CD8-positive, alpha-beta T cell (primary cell): ENCODE measurements at regions of chr1 and their contacts with region 1.

Region 1: DNA sequence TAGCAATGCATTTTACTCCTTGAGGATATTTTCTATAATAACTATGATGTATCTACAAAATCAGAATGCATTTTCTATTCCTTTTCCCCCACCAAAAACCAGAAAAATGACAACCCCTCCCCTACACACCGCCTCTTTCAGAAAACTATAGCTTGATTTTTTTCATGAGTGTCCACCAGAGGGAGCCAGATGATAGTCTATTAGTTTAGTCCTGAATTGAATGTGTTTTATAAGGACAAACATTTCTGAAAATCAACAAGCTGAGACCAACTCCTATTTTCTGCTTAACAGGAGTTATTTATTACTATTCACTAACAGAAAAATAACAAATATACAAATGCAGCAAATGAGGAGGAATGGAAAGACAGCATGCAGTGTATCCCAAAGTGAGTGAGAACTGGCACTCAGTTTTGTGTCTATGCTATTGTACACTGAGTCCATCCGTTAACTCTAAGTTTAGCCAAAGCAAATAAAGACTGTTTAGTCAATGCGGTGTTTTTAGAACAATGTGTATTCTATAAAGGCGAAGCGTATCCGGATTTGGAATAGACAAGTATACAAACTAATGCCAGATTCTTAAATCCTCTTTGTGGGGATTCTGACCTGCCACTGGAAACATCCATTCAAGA is 182.6 kb downstream of the VAV3 start:
- DNase-seq: peak in 5 of 9 experiments; percentile 25 to 82 (median 64)
- ATAC-seq: no peak
- H3K4me3 ChIP-seq: no peak overlapping the region
- H3K4me3 Mint-ChIP-seq: no peak overlapping the region
- H3K27ac ChIP-seq: no peak overlapping the region
- H3K27ac Mint-ChIP-seq: no peak overlapping the region
- H3K4me1 ChIP-seq: peaks cover 29% of the 10 kb centered on the region
- H3K4me1 Mint-ChIP-seq: peaks cover 36% of the 10 kb centered on the region
- H3K27me3 ChIP-seq: no peaks in the 10 kb centered on the region
- H3K27me3 Mint-ChIP-seq: no peaks in the 10 kb centered on the region
- CTCF ChIP-seq: peak; percentile 91

Region 2: GRCh38 chr1:107793896-107794453 is 11.6 kb after region 1 on chr1:
- CTCF ChIA-PET with region 1: interaction called, 10 read pairs
- POLR2A ChIA-PET with region 1: interaction called, 7 read pairs
- intact Hi-C with region 1: no loop called
- DNase-seq: no peak
- ATAC-seq: no peak
- H3K4me3 ChIP-seq: no peak overlapping the region
- H3K4me3 Mint-ChIP-seq: no peak overlapping the region
- H3K27ac ChIP-seq: no peak overlapping the region
- H3K27ac Mint-ChIP-seq: no peak overlapping the region
- H3K4me1 ChIP-seq: peaks cover 4% of the 10 kb centered on the region
- H3K4me1 Mint-ChIP-seq: peaks cover 29% of the 10 kb centered on the region
- H3K27me3 ChIP-seq: no peaks in the 10 kb centered on the region
- H3K27me3 Mint-ChIP-seq: no peaks in the 10 kb centered on the region
- CTCF ChIP-seq: no peak

Region 3: GRCh38 chr1:107840725-107841124 is 58.4 kb after region 1 on chr1:
- CTCF ChIA-PET with region 1: interaction called, 3 read pairs
- POLR2A ChIA-PET with region 1: no interaction called
- intact Hi-C with region 1: loop called in 1 of 2 experiments (anchors 2 kb)
- DNase-seq: peak in 2 of 9 experiments; percentile 37 to 63
- ATAC-seq: peak; percentile 50
- H3K4me3 ChIP-seq: peak overlapping the region; percentile 2 to 6
- H3K4me3 Mint-ChIP-seq: peak overlapping the region; percentile 42
- H3K27ac ChIP-seq: peak overlapping the region in 1 of 2 experiments; percentile 73
- H3K27ac Mint-ChIP-seq: peak overlapping the region; percentile 81
- H3K4me1 ChIP-seq: peaks cover 64% of the 10 kb centered on the region
- H3K4me1 Mint-ChIP-seq: peaks cover 87% of the 10 kb centered on the region
- H3K27me3 ChIP-seq: no peaks in the 10 kb centered on the region
- H3K27me3 Mint-ChIP-seq: no peaks in the 10 kb centered on the region
- CTCF ChIP-seq: no peak

Region 4: GRCh38 chr1:107949467-107950253 is 167.3 kb after region 1 on chr1:
- CTCF ChIA-PET with region 1: no interaction called
- POLR2A ChIA-PET with region 1: no interaction called
- intact Hi-C with region 1: no loop called
- DNase-seq: no peak
- ATAC-seq: no peak
- H3K4me3 ChIP-seq: no peak overlapping the region
- H3K4me3 Mint-ChIP-seq: no peak overlapping the region
- H3K27ac ChIP-seq: peak overlapping the region in 1 of 2 experiments; percentile 37
- H3K27ac Mint-ChIP-seq: no peak overlapping the region
- H3K4me1 ChIP-seq: peaks cover 15% of the 10 kb centered on the region
- H3K4me1 Mint-ChIP-seq: peaks cover 52% of the 10 kb centered on the region
- H3K27me3 ChIP-seq: no peaks in the 10 kb centered on the region
- H3K27me3 Mint-ChIP-seq: no peaks in the 10 kb centered on the region
- CTCF ChIP-seq: no peak

Region 5: GRCh38 chr1:108118018-108118902 is 335.9 kb after region 1 on chr1:
- CTCF ChIA-PET with region 1: interaction called, 492 read pairs
- POLR2A ChIA-PET with region 1: interaction called, 15 read pairs
- intact Hi-C with region 1: no loop called
- DNase-seq: no peak
- ATAC-seq: no peak
- H3K4me3 ChIP-seq: no peak overlapping the region
- H3K4me3 Mint-ChIP-seq: no peak overlapping the region
- H3K27ac ChIP-seq: no peak overlapping the region
- H3K27ac Mint-ChIP-seq: no peak overlapping the region
- H3K4me1 ChIP-seq: no peaks in the 10 kb centered on the region
- H3K4me1 Mint-ChIP-seq: peaks cover 2% of the 10 kb centered on the region
- H3K27me3 ChIP-seq: no peaks in the 10 kb centered on the region
- H3K27me3 Mint-ChIP-seq: no peaks in the 10 kb centered on the region
- CTCF ChIP-seq: no peak

Region 6: GRCh38 chr1:108190707-108191411 is 408.5 kb after region 1 on chr1:
- CTCF ChIA-PET with region 1: interaction called, 3 read pairs
- POLR2A ChIA-PET with region 1: no interaction called
- intact Hi-C with region 1: loop called in 1 of 2 experiments (anchors 5 kb)
- DNase-seq: no peak
- ATAC-seq: no peak
- H3K4me3 ChIP-seq: no peak overlapping the region
- H3K4me3 Mint-ChIP-seq: no peak overlapping the region
- H3K27ac ChIP-seq: no peak overlapping the region
- H3K27ac Mint-ChIP-seq: no peak overlapping the region
- H3K4me1 ChIP-seq: no peaks in the 10 kb centered on the region
- H3K4me1 Mint-ChIP-seq: no peaks in the 10 kb centered on the region
- H3K27me3 ChIP-seq: no peaks in the 10 kb centered on the region
- H3K27me3 Mint-ChIP-seq: no peaks in the 10 kb centered on the region
- CTCF ChIP-seq: no peak